Tibial artery (tissue), 4 donors: ENCODE measurements at regions of chr21 and their contacts with region 1.

Region 1: GRCh38 chr21:26170471-26171257 is at the start of gene APP:
- DNase-seq: peak; percentile 78 to 92
- H3K4me3 ChIP-seq: peak within 1 kb of the TSS; percentile 71 to 81
- H3K27ac ChIP-seq: peak within 1 kb of the TSS; percentile 78 to 79
- H3K4me1 ChIP-seq: peaks cover 0 to 21% (median 3%) of the 10 kb centered on the region in 4 donors
- H3K27me3 ChIP-seq: no peaks in the 10 kb centered on the region
- CTCF ChIP-seq: peak; percentile 96 to 98

Region 2: GRCh38 chr21:25734904-25735645 is 435.6 kb before region 1 on chr21 and contains the starts of genes ATP5PF and GABPA:
- intact Hi-C with region 1: loop called (anchors 10 kb)
- DNase-seq: peak; percentile 97 to 98
- H3K4me3 ChIP-seq: peak within 1 kb of the TSS; percentile 82 to 97
- H3K27ac ChIP-seq: peak within 1 kb of the TSS; percentile 96 to 99
- H3K4me1 ChIP-seq: peaks cover 0 to 46% (median 26%) of the 10 kb centered on the region in 4 donors
- H3K27me3 ChIP-seq: no peaks in the 10 kb centered on the region
- CTCF ChIP-seq: peak in 1 of 2 experiments; percentile 19

Region 3: DNA sequence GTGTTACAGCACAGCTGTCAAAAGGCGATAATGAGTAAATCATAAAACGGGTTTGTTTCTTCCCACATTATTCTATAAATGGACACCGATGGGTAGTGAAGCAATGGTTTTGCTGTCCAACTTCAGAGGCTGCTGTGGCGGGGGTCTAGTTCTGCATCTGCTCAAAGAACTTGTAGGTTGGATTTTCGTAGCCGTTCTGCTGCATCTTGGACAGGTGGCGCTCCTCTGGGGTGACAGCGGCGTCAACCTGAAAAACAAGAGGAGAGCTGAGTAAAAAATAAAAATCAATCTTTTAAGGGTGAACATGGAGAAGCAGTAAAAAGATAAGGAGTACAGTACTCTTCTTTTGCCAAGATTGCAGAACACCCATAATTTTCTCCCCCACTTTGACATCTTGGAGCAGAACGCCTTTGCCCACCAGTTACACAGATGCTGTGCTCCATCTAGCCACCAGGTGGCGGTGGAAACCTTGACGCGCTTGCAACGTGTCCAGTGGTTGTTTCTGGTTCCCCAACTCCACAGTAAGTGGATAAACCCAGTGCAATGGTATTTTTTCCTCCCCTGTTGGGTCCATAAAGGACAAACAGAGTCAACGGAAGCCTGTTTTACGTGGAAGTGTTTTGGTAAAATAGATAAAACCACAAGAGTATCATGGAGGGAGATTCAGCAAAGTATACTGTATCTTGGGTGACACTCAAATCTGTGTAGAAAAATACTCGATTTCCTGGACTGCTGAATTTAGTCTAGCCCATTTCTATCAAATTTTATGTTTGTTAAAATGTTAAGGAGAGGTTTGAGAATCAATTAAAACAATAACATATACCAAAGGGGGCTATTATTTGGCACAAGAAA is 288.9 kb before region 1 on chr21:
- intact Hi-C with region 1: loop called (anchors 2 kb)
- DNase-seq: peak; percentile 57 to 75
- H3K4me3 ChIP-seq: no peak overlapping the region
- H3K27ac ChIP-seq: no peak overlapping the region
- H3K4me1 ChIP-seq: peaks cover 0 to 15% (median 5%) of the 10 kb centered on the region in 4 donors
- H3K27me3 ChIP-seq: no peaks in the 10 kb centered on the region
- CTCF ChIP-seq: peak; percentile 90 to 92

Region 4: GRCh38 chr21:25895565-25896205 is 275.0 kb before region 1 on chr21:
- intact Hi-C with region 1: loop called (anchors 5 kb)
- DNase-seq: no peak
- H3K4me3 ChIP-seq: no peak overlapping the region
- H3K27ac ChIP-seq: no peak overlapping the region
- H3K4me1 ChIP-seq: peaks cover 0 to 10% (median 1%) of the 10 kb centered on the region in 4 donors
- H3K27me3 ChIP-seq: no peaks in the 10 kb centered on the region
- CTCF ChIP-seq: peak; percentile 61 to 63

Region 5: GRCh38 chr21:26116456-26117011 is 54.1 kb before region 1 on chr21:
- intact Hi-C with region 1: no loop called
- DNase-seq: no peak
- H3K4me3 ChIP-seq: no peak overlapping the region
- H3K27ac ChIP-seq: peak overlapping the region in 1 of 2 donors; percentile 32
- H3K4me1 ChIP-seq: peaks cover 0 to 27% (median 11%) of the 10 kb centered on the region in 4 donors
- H3K27me3 ChIP-seq: no peaks in the 10 kb centered on the region
- CTCF ChIP-seq: no peak